CD4-positive, alpha-beta memory T cell (primary cell): ENCODE measurements at regions of chr1 and their contacts with region 1.

Region 1: GRCh38 chr1:236103646-236104218 is 38.6 kb upstream of the GPR137B start:
- DNase-seq: peak; percentile 53 to 67 (median 58)
- H3K4me3 ChIP-seq: no peak overlapping the region
- H3K4me3 Mint-ChIP-seq: peak overlapping the region in 1 of 8 donors; percentile 23
- H3K27ac ChIP-seq: no peak overlapping the region
- H3K27ac Mint-ChIP-seq: no peak overlapping the region
- H3K4me1 ChIP-seq: no peaks in the 10 kb centered on the region
- H3K4me1 Mint-ChIP-seq: peaks cover 2 to 5% (median 4%) of the 10 kb centered on the region in 4 donors
- H3K27me3 ChIP-seq: no peaks in the 10 kb centered on the region
- H3K27me3 Mint-ChIP-seq: peaks cover 0 to under 1% of the 10 kb centered on the region in 2 donors

Region 2: GRCh38 chr1:235999259-235999925 is 104.3 kb before region 1 on chr1:
- CTCF ChIA-PET with region 1: no interaction called
- POLR2A ChIA-PET with region 1: no interaction called
- intact Hi-C with region 1: loop called (anchors 1 kb)
- DNase-seq: peak; percentile 81 to 95 (median 83)
- H3K4me3 ChIP-seq: peak overlapping the region in 1 of 2 donors; percentile 15
- H3K4me3 Mint-ChIP-seq: peak overlapping the region; percentile 26 to 88 (median 73)
- H3K27ac ChIP-seq: peak overlapping the region; percentile 90
- H3K27ac Mint-ChIP-seq: peak overlapping the region; percentile 88 to 100 (median 99)
- H3K4me1 ChIP-seq: peaks cover 53% of the 10 kb centered on the region
- H3K4me1 Mint-ChIP-seq: peaks cover 37 to 58% (median 49%) of the 10 kb centered on the region in 4 donors
- H3K27me3 ChIP-seq: no peaks in the 10 kb centered on the region
- H3K27me3 Mint-ChIP-seq: no peaks in the 10 kb centered on the region

Region 3: GRCh38 chr1:236275061-236275460 is 171.3 kb after region 1 on chr1:
- CTCF ChIA-PET with region 1: no interaction called
- POLR2A ChIA-PET with region 1: no interaction called
- intact Hi-C with region 1: no loop called
- DNase-seq: no peak
- H3K4me3 ChIP-seq: no peak overlapping the region
- H3K4me3 Mint-ChIP-seq: no peak overlapping the region
- H3K27ac ChIP-seq: no peak overlapping the region
- H3K27ac Mint-ChIP-seq: no peak overlapping the region
- H3K4me1 ChIP-seq: peaks cover 4% of the 10 kb centered on the region
- H3K4me1 Mint-ChIP-seq: peaks cover 21 to 42% (median 29%) of the 10 kb centered on the region in 4 donors
- H3K27me3 ChIP-seq: no peaks in the 10 kb centered on the region
- H3K27me3 Mint-ChIP-seq: no peaks in the 10 kb centered on the region

Region 4: GRCh38 chr1:236489710-236490377 is 386.1 kb after region 1 on chr1:
- CTCF ChIA-PET with region 1: interaction called, 27 read pairs
- POLR2A ChIA-PET with region 1: no interaction called
- intact Hi-C with region 1: no loop called
- DNase-seq: peak in 4 of 5 donors; percentile 43 to 50 (median 44)
- H3K4me3 ChIP-seq: no peak overlapping the region
- H3K4me3 Mint-ChIP-seq: no peak overlapping the region
- H3K27ac ChIP-seq: no peak overlapping the region
- H3K27ac Mint-ChIP-seq: no peak overlapping the region
- H3K4me1 ChIP-seq: no peaks in the 10 kb centered on the region
- H3K4me1 Mint-ChIP-seq: peaks cover 13 to 22% (median 16%) of the 10 kb centered on the region in 4 donors
- H3K27me3 ChIP-seq: no peaks in the 10 kb centered on the region
- H3K27me3 Mint-ChIP-seq: peaks cover 2 to 3% of the 10 kb centered on the region in 2 donors

Region 5: GRCh38 chr1:236759252-236759859 is 655.6 kb after region 1 on chr1:
- CTCF ChIA-PET with region 1: no interaction called
- POLR2A ChIA-PET with region 1: no interaction called
- intact Hi-C with region 1: loop called (anchors 10 kb)
- DNase-seq: peak in 4 of 5 donors; percentile 19 to 40 (median 32)
- H3K4me3 ChIP-seq: no peak overlapping the region
- H3K4me3 Mint-ChIP-seq: peak overlapping the region in 5 of 8 donors; percentile 2 to 56 (median 44)
- H3K27ac ChIP-seq: no peak overlapping the region
- H3K27ac Mint-ChIP-seq: no peak overlapping the region
- H3K4me1 ChIP-seq: no peaks in the 10 kb centered on the region
- H3K4me1 Mint-ChIP-seq: peaks cover 0 to 2% (median under 1%) of the 10 kb centered on the region in 4 donors
- H3K27me3 ChIP-seq: no peaks in the 10 kb centered on the region
- H3K27me3 Mint-ChIP-seq: no peaks in the 10 kb centered on the region

Region 6: GRCh38 chr1:236795035-236795756 is 691.5 kb after region 1 on chr1 and contains the start of gene MTR:
- CTCF ChIA-PET with region 1: no interaction called
- POLR2A ChIA-PET with region 1: no interaction called
- intact Hi-C with region 1: loop called (anchors 10 kb)
- DNase-seq: peak; percentile 95 to 98 (median 95)
- H3K4me3 ChIP-seq: peak within 1 kb of the TSS; percentile 83 to 97
- H3K4me3 Mint-ChIP-seq: peak within 1 kb of the TSS; percentile 92 to 98 (median 96)
- H3K27ac ChIP-seq: peak within 1 kb of the TSS; percentile 99
- H3K27ac Mint-ChIP-seq: peak within 1 kb of the TSS; percentile 95 to 99 (median 98)
- H3K4me1 ChIP-seq: peaks cover 39% of the 10 kb centered on the region
- H3K4me1 Mint-ChIP-seq: peaks cover 25 to 49% (median 31%) of the 10 kb centered on the region in 4 donors
- H3K27me3 ChIP-seq: no peaks in the 10 kb centered on the region
- H3K27me3 Mint-ChIP-seq: peaks cover 1 to 5% of the 10 kb centered on the region in 2 donors
- total RNA-seq, gene MTR: 68.4 to 71.0 TPM

Region 7: GRCh38 chr1:236868625-236869467 is 765.1 kb after region 1 on chr1:
- CTCF ChIA-PET with region 1: interaction called, 4 read pairs
- POLR2A ChIA-PET with region 1: no interaction called
- intact Hi-C with region 1: loop called (anchors 1 kb)
- DNase-seq: peak in 4 of 5 donors; percentile 32 to 41 (median 35)
- H3K4me3 ChIP-seq: no peak overlapping the region
- H3K4me3 Mint-ChIP-seq: no peak overlapping the region
- H3K27ac ChIP-seq: no peak overlapping the region
- H3K27ac Mint-ChIP-seq: peak overlapping the region in 2 of 7 donors; percentile 17 to 65
- H3K4me1 ChIP-seq: no peaks in the 10 kb centered on the region
- H3K4me1 Mint-ChIP-seq: peaks cover 0 to 4% (median 0%) of the 10 kb centered on the region in 4 donors
- H3K27me3 ChIP-seq: no peaks in the 10 kb centered on the region
- H3K27me3 Mint-ChIP-seq: no peaks in the 10 kb centered on the region